ENCODE measurements at regions of chr7 and their contacts with region 1.

Region 1: GRCh38 chr7:92461027-92462003 is 14.0 kb downstream of the GATAD1 start:
- DNase-seq: peak; percentile 25
- H3K4me3 ChIP-seq: no peak overlapping the region
- H3K27ac ChIP-seq: no peak overlapping the region
- H3K4me1 ChIP-seq: peaks cover 0 to 5% (median 0%) of the 10 kb centered on the region in 4 donors
- H3K27me3 ChIP-seq: no peaks in the 10 kb centered on the region
- CTCF ChIP-seq: peak; percentile 44 to 64 (median 61)
- EP300 ChIP-seq: no peak
- POLR2A ChIP-seq: no peak

Region 2: GRCh38 chr7:91843831-91844230 is 617.5 kb before region 1 on chr7:
- in situ Hi-C with region 1: loop called in 1 of 4 experiments (anchors 25 kb)
- intact Hi-C with region 1: no loop called
- DNase-seq: no peak
- H3K4me3 ChIP-seq: no peak overlapping the region
- H3K27ac ChIP-seq: no peak overlapping the region
- H3K4me1 ChIP-seq: no peaks in the 10 kb centered on the region
- H3K27me3 ChIP-seq: no peaks in the 10 kb centered on the region
- CTCF ChIP-seq: no peak
- EP300 ChIP-seq: no peak
- POLR2A ChIP-seq: no peak

Region 3: DNA sequence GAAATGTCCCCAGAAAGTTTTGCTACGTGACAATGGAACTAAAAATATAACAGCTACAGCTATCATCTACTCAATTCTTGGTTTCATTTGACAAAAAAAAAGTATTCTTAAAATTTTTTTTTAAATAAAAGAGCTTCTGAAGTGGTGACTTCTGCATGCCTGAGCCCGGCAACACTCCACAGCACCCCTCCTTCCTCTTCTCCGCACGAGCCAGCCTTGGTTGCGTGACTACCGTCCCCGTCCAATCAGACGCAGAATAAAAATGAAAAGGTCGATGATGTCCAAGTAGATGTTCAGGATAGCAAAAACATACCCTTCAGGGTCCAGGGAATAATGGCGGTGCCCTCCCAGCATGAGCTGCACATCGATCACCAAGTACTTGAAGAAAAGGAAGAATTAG is 48.6 kb before region 1 on chr7:
- in situ Hi-C with region 1: no loop called
- intact Hi-C with region 1: no loop called
- DNase-seq: no peak
- H3K4me3 ChIP-seq: no peak overlapping the region
- H3K27ac ChIP-seq: no peak overlapping the region
- H3K4me1 ChIP-seq: no peaks in the 10 kb centered on the region
- H3K27me3 ChIP-seq: peaks cover 7% of the 10 kb centered on the region
- CTCF ChIP-seq: no peak
- EP300 ChIP-seq: no peak
- POLR2A ChIP-seq: no peak

Region 4: DNA sequence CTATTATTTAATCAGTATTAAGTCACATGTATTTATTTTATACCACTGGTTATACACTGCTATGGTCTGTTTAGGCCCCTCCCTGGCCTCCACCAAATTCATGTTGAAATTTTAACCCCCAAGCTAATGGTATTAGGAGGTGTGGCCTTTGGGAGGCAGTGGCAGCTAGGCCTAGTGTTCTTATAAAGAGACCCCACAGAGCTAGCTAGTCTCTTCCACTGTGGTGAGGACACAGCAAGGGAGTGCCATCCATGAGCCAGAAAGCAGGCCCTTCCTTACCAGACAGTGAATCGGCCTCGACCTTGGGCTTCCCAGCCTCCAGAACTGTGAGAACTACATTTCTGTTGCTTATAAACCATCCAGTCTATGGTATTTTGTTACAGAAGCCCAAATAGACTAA is 95.9 kb after region 1 on chr7:
- in situ Hi-C with region 1: no loop called
- intact Hi-C with region 1: no loop called
- DNase-seq: no peak
- H3K4me3 ChIP-seq: no peak overlapping the region
- H3K27ac ChIP-seq: no peak overlapping the region
- H3K4me1 ChIP-seq: no peaks in the 10 kb centered on the region
- H3K27me3 ChIP-seq: no peaks in the 10 kb centered on the region
- CTCF ChIP-seq: no peak
- EP300 ChIP-seq: no peak
- POLR2A ChIP-seq: no peak

Region 5: GRCh38 chr7:92763636-92764423 is 302.5 kb after region 1 on chr7:
- in situ Hi-C with region 1: no loop called
- intact Hi-C with region 1: no loop called
- DNase-seq: no peak
- H3K4me3 ChIP-seq: no peak overlapping the region
- H3K27ac ChIP-seq: no peak overlapping the region
- H3K4me1 ChIP-seq: peaks cover 0 to 33% (median 18%) of the 10 kb centered on the region in 4 donors
- H3K27me3 ChIP-seq: no peaks in the 10 kb centered on the region
- CTCF ChIP-seq: no peak
- EP300 ChIP-seq: no peak
- POLR2A ChIP-seq: no peak